B cell (primary cell): ENCODE measurements at regions of chr3 and their contacts with region 1.

Region 1: DNA sequence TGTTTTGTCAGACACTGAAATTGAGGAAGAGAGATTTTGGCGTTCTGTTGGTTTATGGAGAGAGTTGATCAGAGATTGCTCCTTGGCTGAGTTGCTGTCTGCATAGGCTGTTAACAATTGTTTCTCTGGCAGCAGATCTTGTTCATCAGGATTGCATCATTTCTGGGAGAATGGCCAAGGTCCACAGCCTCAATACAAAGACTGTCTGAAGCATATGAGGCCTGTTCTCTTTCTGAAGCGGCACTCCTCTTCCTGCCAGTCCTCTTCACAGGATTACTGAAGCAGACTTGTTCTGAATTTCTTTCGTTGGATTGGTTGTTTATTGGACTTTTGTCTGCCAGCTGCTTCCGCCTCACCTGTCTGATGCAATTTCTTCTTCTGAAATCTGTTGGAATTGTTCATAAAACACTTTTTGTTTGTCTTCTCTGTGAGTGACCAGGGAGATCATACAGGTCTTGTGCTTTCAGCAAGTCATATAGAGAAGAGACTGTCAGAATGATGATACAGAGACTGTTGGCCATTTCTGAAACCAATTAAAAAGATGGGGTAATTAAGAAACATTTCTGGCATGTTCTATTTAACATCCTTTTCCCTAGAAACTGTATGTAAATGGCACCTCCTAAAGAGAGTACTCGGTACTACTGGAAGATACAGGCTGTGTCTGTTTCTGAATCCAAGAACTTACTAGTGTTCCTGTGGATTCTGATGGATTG is 25.5 kb downstream of the SETD5 start:
- DNase-seq: peak; percentile 50
- ATAC-seq: peak; percentile 51
- H3K4me3 ChIP-seq: no peak overlapping the region
- H3K4me3 Mint-ChIP-seq: no peak overlapping the region
- H3K27ac ChIP-seq: peak overlapping the region in 1 of 2 donors; percentile 80
- H3K27ac Mint-ChIP-seq: peak overlapping the region; percentile 62
- H3K4me1 ChIP-seq: peaks cover 0 to 6% of the 10 kb centered on the region in 2 donors
- H3K4me1 Mint-ChIP-seq: peaks cover 26% of the 10 kb centered on the region
- H3K27me3 ChIP-seq: no peaks in the 10 kb centered on the region
- H3K27me3 Mint-ChIP-seq: no peaks in the 10 kb centered on the region
- CTCF ChIP-seq: peak; percentile 74

Region 2: GRCh38 chr3:9387322-9387655 is 35.6 kb before region 1 on chr3:
- CTCF ChIA-PET with region 1: no interaction called
- POLR2A ChIA-PET with region 1: no interaction called
- intact Hi-C with region 1: loop called (anchors 5 kb)
- DNase-seq: no peak
- ATAC-seq: no peak
- H3K4me3 ChIP-seq: no peak overlapping the region
- H3K4me3 Mint-ChIP-seq: no peak overlapping the region
- H3K27ac ChIP-seq: no peak overlapping the region
- H3K27ac Mint-ChIP-seq: no peak overlapping the region
- H3K4me1 ChIP-seq: peaks cover 0 to 6% of the 10 kb centered on the region in 2 donors
- H3K4me1 Mint-ChIP-seq: peaks cover 21% of the 10 kb centered on the region
- H3K27me3 ChIP-seq: no peaks in the 10 kb centered on the region
- H3K27me3 Mint-ChIP-seq: no peaks in the 10 kb centered on the region
- CTCF ChIP-seq: no peak

Region 3: DNA sequence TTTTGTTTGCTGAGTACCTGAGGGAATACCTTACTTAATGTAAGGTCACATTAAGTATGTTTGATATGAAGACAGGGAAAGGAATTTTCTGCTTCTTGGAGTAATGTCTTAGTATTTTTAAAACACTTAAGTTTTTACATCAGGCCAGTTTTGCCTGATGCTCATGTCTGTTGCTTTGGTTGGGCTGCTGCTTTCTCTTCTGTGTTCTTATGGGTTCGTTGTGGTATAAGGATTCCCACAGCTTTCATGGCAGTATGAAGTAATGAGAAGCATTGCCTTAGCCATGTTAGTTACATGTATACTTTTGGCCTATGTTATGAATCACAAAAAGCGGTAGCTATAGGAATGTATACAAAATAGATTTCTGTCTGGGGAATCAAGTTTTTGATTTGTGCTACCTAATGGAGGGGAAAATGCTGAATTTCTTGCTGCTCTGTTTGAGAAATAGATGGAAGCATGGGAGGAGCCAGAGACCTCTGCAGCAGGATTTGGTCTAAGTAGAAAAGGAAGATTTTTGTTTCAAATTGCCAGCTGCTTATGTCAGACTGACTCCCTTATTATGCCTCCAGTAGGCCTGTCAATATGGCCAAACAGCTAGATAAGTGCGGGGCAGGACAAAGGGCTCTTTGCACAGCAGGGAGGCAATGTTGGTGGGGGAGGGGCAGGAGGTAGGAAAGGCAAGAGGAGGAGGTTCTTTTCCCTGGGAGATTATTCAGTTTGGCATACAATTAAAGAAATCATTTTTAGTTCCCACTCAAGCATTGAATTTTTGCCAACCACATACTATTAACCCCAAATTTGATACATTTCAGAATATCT is 20.2 kb before region 1 on chr3:
- CTCF ChIA-PET with region 1: interaction called, 3 read pairs
- POLR2A ChIA-PET with region 1: interaction called, 5 read pairs
- intact Hi-C with region 1: loop called (anchors 2 kb)
- DNase-seq: no peak
- ATAC-seq: no peak
- H3K4me3 ChIP-seq: no peak overlapping the region
- H3K4me3 Mint-ChIP-seq: no peak overlapping the region
- H3K27ac ChIP-seq: peak overlapping the region in 1 of 2 donors; percentile 2
- H3K27ac Mint-ChIP-seq: no peak overlapping the region
- H3K4me1 ChIP-seq: peaks cover 55 to 74% of the 10 kb centered on the region in 2 donors
- H3K4me1 Mint-ChIP-seq: peaks cover 77% of the 10 kb centered on the region
- H3K27me3 ChIP-seq: no peaks in the 10 kb centered on the region
- H3K27me3 Mint-ChIP-seq: no peaks in the 10 kb centered on the region
- CTCF ChIP-seq: no peak